Sigmoid colon (tissue), 7 donors: ENCODE measurements at regions of chr6 and their contacts with region 1.

Region 1: GRCh38 chr6:10747251-10747972 is at the start of gene TMEM14B:
- DNase-seq: peak; percentile 100
- H3K4me3 ChIP-seq: peak within 1 kb of the TSS; percentile 48 to 80 (median 59)
- H3K27ac ChIP-seq: peak within 1 kb of the TSS; percentile 76 to 88 (median 79)
- H3K4me1 ChIP-seq: peaks cover 0 to 32% (median 27%) of the 10 kb centered on the region in 4 donors
- H3K27me3 ChIP-seq: no peaks in the 10 kb centered on the region
- CTCF ChIP-seq: no peak
- EP300 ChIP-seq: peak in 1 of 4 donors; percentile 73
- POLR2A ChIP-seq: peak; percentile 61 to 79
- total RNA-seq, gene TMEM14B: 51.5 to 124 (median 98.2) TPM

Region 2: GRCh38 chr6:10722820-10723566 is 24.4 kb before region 1 on chr6 and contains the start of gene TMEM14C:
- intact Hi-C with region 1: loop called (anchors 1 kb)
- DNase-seq: peak; percentile 100
- H3K4me3 ChIP-seq: peak within 1 kb of the TSS; percentile 74 to 85 (median 79)
- H3K27ac ChIP-seq: peak within 1 kb of the TSS; percentile 91 to 94 (median 93)
- H3K4me1 ChIP-seq: peaks cover 0 to 36% (median 28%) of the 10 kb centered on the region in 4 donors
- H3K27me3 ChIP-seq: no peaks in the 10 kb centered on the region
- CTCF ChIP-seq: no peak
- EP300 ChIP-seq: peak in 1 of 4 donors; percentile 15
- POLR2A ChIP-seq: peak; percentile 80 to 87
- total RNA-seq, gene TMEM14C: 115 to 199 (median 170) TPM

Region 3: DNA sequence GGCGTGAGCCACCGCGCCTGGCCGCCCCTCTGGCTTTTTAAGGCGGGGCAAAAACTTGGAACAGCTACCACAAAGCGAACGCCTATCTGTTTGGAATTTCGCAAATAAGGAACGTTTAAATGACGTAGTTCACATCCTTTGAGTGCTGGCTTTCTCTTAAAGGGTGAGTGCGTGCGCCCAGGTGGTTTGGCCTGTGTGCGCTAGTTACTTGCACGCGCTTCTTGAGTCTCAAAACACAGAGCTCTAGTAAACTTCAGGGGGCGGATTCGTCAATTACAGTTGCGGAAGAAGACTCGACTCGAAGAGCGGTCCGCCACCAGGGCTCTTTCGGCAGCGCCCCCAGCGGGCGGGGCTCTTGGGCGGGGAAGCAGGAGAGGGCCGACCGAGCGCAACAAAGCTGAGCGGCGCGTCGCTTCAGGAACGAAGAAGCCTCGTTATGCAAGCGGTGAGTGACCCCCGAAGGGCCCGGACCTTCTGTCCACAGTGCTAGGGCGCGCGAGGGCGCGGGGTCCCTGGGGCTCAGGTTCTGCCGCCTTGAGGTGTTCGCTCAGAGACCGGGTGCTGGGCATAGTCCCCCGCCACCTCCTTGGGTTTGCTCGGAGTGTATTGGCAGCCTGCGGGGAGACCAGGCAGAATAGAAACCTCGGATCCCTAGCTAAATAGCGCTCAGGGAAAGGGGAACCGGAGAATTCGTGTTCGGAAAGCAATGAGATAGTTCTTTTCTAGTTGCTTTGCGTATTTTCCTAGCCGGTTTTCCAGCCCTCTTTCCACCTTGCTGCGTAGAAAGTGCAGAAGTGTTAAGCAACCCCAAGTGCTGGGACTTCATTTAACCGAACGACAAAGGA is 139.5 kb after region 1 on chr6 and contains the start of gene SYCP2L:
- intact Hi-C with region 1: no loop called
- DNase-seq: no peak
- H3K4me3 ChIP-seq: peak within 1 kb of the TSS in 3 of 4 donors; percentile 18 to 36 (median 35)
- H3K27ac ChIP-seq: no peak within 1 kb of the TSS
- H3K4me1 ChIP-seq: peaks cover 0 to 32% (median 16%) of the 10 kb centered on the region in 4 donors
- H3K27me3 ChIP-seq: peaks cover 21 to 71% (median 51%) of the 10 kb centered on the region in 3 donors
- CTCF ChIP-seq: no peak
- EP300 ChIP-seq: no peak
- POLR2A ChIP-seq: no peak
- total RNA-seq, gene SYCP2L: 0.66 to 22.1 (median 0.91) TPM

Region 4: GRCh38 chr6:11093589-11094410 is 346.4 kb after region 1 on chr6 and contains the start of gene SMIM13:
- intact Hi-C with region 1: loop called (anchors 10 kb)
- DNase-seq: peak; percentile 98
- H3K4me3 ChIP-seq: peak within 1 kb of the TSS; percentile 89 to 98 (median 92)
- H3K27ac ChIP-seq: peak within 1 kb of the TSS; percentile 97 to 98 (median 98)
- H3K4me1 ChIP-seq: peaks cover 0 to 24% (median 18%) of the 10 kb centered on the region in 4 donors
- H3K27me3 ChIP-seq: no peaks in the 10 kb centered on the region
- CTCF ChIP-seq: peak; percentile 33 to 52 (median 42)
- EP300 ChIP-seq: no peak
- POLR2A ChIP-seq: peak; percentile 54 to 57
- total RNA-seq, gene SMIM13: 8.7 to 12.1 (median 8.8) TPM